OCI-LY7 (cell line): ENCODE measurements at regions of chr9 and their contacts with region 1.

Region 1: DNA sequence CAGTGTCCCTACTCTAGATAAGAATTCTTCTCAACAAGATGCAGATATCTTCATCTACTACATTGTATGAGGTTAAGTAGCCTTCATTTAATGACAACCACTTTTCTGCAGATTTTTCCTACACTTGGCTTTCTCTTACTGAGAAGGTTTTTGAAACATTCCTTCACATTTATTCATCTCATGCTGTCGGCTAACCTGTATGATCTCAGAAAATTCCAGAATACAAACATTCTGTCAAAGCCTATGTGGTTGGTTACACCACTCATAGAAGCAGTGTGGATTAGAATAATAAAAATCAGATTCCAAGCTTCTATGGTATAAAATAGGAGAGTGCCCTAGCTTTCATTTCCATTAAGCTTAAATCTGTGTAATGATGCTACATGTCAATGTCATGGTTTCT is 39.4 kb upstream of the ERCC6L2 start:
- DNase-seq: no peak
- H3K4me3 ChIP-seq: no peak overlapping the region
- H3K27ac ChIP-seq: no peak overlapping the region
- H3K4me1 ChIP-seq: no peaks in the 10 kb centered on the region
- CTCF ChIP-seq: no peak

Region 2: DNA sequence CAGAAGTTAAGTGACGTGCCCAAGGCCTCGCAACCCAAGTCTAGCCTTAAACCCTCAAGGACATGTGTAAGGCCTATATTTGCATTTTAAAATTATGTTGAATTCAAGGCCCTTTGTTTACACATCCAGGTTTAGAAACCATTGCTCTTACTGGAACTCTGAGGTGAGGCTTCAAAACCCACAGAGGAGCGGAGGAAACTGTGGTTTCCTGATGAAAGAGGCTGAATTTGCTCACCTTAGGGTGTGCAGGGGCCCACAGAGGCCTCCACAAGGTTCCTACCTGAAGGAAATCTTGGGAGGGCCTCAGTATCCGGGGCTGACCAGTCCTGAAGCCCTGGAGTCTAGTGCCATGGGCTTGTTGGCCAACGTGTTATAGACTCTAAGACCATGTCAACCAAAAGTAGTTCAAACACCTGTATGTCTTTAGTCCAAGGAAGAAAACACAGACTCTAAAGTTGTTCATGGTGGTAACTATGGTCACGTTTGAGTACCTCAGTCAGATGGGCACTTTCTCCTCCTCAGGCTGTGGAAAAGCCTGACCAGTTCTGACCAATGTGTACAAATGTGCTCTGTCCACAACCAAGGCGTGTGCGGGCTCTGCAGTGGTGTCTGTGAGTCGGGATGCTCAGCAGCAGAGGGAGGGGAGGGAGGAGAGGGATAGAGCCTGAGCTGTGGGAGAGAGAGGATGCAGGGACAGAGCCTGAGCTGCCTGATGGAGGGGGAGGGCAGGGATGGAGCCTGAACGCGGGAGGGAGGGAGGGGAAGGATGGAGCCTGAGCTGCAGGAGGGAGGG is 85.2 kb before region 1 on chr9:
- CTCF ChIA-PET with region 1: interaction called, 15 read pairs
- POLR2A ChIA-PET with region 1: no interaction called
- intact Hi-C with region 1: no loop called
- DNase-seq: no peak
- H3K4me3 ChIP-seq: no peak overlapping the region
- H3K27ac ChIP-seq: no peak overlapping the region
- H3K4me1 ChIP-seq: no peaks in the 10 kb centered on the region
- CTCF ChIP-seq: no peak